Right ventricle myocardium inferior (tissue), 1 donor: ENCODE measurements at regions of chr7 and their contacts with region 1.

Region 1: GRCh38 chr7:155205368-155206317 is 92.0 kb upstream of the INSIG1 start:
- DNase-seq: peak; percentile 88
- ATAC-seq: peak; percentile 82

Region 2: GRCh38 chr7:154927624-154928143 is 278.0 kb before region 1 on chr7:
- intact Hi-C with region 1: loop called (anchors 5 kb)
- DNase-seq: no peak
- ATAC-seq: peak; percentile 86

Region 3: GRCh38 chr7:155257482-155258225 is 52.0 kb after region 1 on chr7:
- intact Hi-C with region 1: loop called (anchors 5 kb)
- DNase-seq: peak; percentile 87
- ATAC-seq: peak; percentile 90

Region 4: DNA sequence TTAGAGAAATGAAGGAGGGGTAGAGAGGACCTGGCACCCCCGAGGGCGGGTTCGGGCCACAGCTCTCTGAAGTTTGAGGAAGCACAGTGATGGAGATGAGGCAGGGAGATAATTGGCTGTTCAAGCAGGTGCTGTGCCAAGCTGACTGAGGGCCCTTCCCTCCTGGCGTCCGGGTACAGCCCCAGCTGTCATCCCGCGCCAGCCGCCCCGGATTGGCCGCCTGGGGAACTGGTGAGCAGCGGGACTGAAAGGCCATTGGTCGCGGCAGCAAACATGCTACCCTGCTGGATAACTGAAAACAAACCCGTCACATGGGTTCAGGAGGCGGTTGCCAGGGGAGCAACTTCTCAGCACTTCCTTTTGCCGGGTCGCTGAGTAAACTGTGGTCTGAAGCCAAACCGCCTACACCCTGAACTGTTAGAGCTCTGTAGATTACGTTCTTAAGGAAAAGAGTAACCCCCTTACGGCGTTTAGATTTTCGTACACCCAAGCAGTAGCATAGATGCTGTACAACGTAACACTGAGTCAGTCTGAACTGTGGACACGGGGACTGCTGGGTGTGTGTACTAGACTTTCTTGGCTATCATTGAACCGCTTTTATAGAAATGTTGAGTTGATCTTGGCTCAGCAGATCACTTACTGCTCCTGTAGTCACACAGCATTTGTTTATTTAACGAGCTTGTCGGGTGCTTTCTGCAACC is 93.3 kb after region 1 on chr7:
- intact Hi-C with region 1: loop called (anchors 1 kb)
- DNase-seq: peak; percentile 98
- ATAC-seq: peak; percentile 84